ENCODE measurements at regions of chr6 and their contacts with region 1.

Region 1: GRCh38 chr6:47156196-47156595 is 114.1 kb upstream of the ADGRF1 start:
- H3K4me3 ChIP-seq: no peak overlapping the region
- H3K27ac ChIP-seq: no peak overlapping the region
- H3K4me1 ChIP-seq: no peaks in the 10 kb centered on the region
- CTCF ChIP-seq: no peak

Region 2: DNA sequence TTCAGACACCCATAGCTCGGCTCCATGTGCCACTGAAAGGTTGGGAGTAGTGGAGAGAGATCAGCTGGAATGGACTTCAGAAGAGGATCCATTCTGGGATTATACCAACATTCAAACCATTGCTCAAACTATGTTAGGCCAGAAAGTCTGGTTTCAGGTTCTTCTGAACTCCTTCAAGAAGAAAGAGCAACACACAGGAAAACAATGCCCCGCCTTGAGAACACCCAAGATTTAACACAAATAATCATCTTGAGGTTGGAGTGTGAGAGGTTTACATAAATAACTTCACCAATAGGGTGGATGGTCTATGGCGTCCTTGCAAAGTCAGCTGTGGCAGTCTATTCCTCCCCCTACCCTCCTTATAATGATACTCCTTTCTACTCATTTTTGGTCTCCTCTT is 1566.8 kb before region 1 on chr6:
- CTCF ChIA-PET with region 1: interaction called, 11 read pairs
- POLR2A ChIA-PET with region 1: no interaction called
- H3K4me3 ChIP-seq: no peak overlapping the region
- H3K27ac ChIP-seq: no peak overlapping the region
- H3K4me1 ChIP-seq: peaks cover 25% of the 10 kb centered on the region
- CTCF ChIP-seq: no peak

Region 3: DNA sequence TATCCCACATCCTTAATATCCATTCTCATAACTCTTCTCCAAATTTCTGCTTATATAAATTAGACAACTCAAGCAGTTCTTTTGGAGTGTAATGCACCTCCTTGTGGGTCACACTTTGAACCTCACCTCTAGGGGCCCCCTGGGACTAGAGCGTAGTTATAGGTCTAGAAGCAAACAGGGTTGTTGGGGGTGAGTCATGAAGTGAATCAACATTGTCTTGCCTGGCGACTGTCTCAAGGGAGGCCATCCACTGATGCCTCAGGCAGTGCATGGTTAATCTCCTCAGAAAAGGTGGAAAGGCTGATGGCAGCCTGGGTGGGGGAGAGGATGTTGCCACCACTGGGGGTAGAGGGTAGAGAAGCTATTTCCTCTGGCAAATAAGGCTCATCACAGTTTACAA is 24.4 kb after region 1 on chr6:
- CTCF ChIA-PET with region 1: interaction called, 10 read pairs
- POLR2A ChIA-PET with region 1: no interaction called
- H3K4me3 ChIP-seq: no peak overlapping the region
- H3K27ac ChIP-seq: no peak overlapping the region
- H3K4me1 ChIP-seq: peaks cover 4% of the 10 kb centered on the region
- CTCF ChIP-seq: no peak

Measured in HEK293 (cell line).